ENCODE measurements at regions of chr9 and their contacts with region 1.

Region 1: GRCh38 chr9:134443168-134444037 is 117.1 kb downstream of the RXRA start:
- DNase-seq: peak; percentile 94
- ATAC-seq: peak; percentile 100
- H3K4me3 Mint-ChIP-seq: no peak overlapping the region
- H3K27ac Mint-ChIP-seq: peak overlapping the region; percentile 67
- H3K4me1 Mint-ChIP-seq: peaks cover 17% of the 10 kb centered on the region
- H3K27me3 Mint-ChIP-seq: peaks cover 12% of the 10 kb centered on the region

Region 2: GRCh38 chr9:134171316-134172197 is 271.8 kb before region 1 on chr9:
- CTCF ChIA-PET with region 1: interaction called, 42 read pairs
- POLR2A ChIA-PET with region 1: interaction called, 3 read pairs
- DNase-seq: no peak
- ATAC-seq: no peak
- H3K4me3 Mint-ChIP-seq: no peak overlapping the region
- H3K27ac Mint-ChIP-seq: no peak overlapping the region
- H3K4me1 Mint-ChIP-seq: peaks cover 1% of the 10 kb centered on the region
- H3K27me3 Mint-ChIP-seq: no peaks in the 10 kb centered on the region

Measured in activated CD8-positive, alpha-beta T cell treated with anti-CD3 and anti-CD28 coated beads, Interleukin-2, amount 10 ng/mL, durations not matched to agents 7 days and 5 days (primary cell).